Dorsolateral prefrontal cortex (tissue), 120 donors: ENCODE measurements at regions of chr17 and their contacts with region 1.

Region 1: DNA sequence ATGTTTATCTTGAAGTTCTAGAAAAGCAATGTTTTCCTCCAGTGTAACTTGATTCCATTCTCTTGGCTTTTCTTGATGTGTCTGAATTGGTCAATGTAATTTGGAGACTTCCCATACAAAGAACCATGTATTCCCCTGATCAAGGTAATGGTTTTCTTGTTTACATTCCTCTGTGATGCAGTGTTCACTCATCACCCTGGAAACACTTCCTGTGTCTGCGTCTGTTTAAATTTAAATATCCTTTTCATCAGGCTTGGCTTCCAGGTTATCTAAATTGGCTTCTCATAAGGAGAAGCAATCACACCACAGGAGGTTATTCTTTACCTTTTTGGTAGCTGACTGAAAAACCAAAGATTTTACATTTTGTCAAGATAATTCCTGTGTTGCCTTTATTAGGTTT is 237.3 kb upstream of the WSCD1 start:
- DNase-seq: no peak
- H3K4me3 ChIP-seq: no peak overlapping the region
- H3K27ac ChIP-seq: no peak overlapping the region
- H3K27me3 ChIP-seq: peaks cover 0 to 10% (median 0%) of the 10 kb centered on the region in 45 donors
- CTCF ChIP-seq: no peak

Region 2: DNA sequence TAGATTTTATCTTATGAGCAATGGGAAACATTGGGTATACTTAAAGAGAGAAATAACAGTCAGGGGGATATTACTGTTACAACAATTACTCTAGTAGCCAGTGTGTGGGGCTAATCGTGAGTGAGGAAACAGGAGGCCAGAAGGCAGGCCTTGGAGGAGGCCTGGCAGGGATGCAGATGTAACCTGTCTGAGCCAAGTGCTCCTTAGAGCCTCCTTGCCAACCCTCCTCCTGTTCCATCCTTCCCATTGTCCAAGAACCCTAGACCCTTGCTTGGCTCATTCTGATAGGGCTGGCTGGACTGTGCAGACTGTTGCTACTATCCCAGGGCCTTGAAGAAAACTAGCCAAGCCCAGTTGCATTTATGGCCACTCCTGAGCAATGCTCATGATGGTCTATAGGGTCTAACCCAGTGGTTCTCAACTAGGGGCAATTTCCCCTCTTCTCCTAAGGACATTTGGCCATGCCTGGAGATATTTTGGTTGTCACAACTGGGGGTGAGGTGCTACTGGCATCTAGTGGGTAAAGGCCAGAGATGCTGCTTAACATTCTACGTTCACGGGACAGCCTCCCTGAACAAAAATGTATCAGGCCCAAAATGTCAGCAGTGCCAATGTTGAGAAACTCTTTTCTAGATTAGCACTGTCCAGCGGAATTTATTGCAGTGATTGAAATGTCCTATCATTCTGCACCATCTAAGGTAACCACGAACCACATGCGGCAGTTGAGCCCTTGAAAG is 212.9 kb after region 1 on chr17:
- intact Hi-C with region 1: loop called (anchors 5 to 10 kb)
- DNase-seq: peak in 1 of 10 donors; percentile 74
- H3K4me3 ChIP-seq: no peak overlapping the region
- H3K27ac ChIP-seq: no peak overlapping the region
- H3K27me3 ChIP-seq: peaks cover 0 to 5% (median 0%) of the 10 kb centered on the region in 45 donors
- CTCF ChIP-seq: peak in 43 of 56 donors; percentile 12 to 58 (median 35)